ENCODE measurements at regions of chr9 and their contacts with region 1.

Region 1: DNA sequence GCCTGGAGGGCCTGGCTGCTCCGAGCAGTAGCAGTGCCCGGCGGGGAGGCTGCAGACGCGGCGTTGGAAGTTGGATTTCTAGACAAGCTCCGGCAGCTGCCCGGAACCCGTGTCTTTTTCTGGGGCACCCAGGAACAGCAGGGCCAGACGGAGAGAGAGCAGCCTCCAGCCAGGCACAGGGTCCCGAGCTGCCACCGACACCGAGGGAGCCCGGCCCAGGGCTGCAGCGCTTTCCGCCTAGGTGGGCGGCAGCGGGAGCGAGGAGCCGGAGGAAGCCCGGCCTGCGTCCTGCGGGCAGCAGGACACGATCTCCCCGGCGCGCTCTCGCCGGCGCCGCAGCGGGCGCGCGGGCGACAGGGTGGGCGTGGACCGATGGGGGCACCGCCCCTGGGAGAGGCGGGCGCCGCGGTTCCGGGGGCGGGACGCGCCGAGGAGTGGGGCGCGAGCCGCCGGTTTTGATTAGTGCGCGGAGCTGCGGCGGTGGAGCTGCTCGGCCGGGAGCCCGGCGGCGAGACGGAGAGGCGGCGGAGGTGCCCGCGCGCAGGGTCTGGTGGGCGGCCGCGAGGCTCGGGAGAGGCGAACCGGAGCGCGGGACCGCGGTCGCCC is at the start of gene UGCG:
- DNase-seq: peak; percentile 97
- H3K4me3 Mint-ChIP-seq: peak within 1 kb of the TSS; percentile 96
- H3K27ac Mint-ChIP-seq: peak within 1 kb of the TSS; percentile 88
- H3K4me1 Mint-ChIP-seq: peaks cover 22% of the 10 kb centered on the region
- H3K27me3 Mint-ChIP-seq: no peaks in the 10 kb centered on the region
- total RNA-seq, gene UGCG: 19.9 and 22.4 TPM in 2 replicates

Region 2: DNA sequence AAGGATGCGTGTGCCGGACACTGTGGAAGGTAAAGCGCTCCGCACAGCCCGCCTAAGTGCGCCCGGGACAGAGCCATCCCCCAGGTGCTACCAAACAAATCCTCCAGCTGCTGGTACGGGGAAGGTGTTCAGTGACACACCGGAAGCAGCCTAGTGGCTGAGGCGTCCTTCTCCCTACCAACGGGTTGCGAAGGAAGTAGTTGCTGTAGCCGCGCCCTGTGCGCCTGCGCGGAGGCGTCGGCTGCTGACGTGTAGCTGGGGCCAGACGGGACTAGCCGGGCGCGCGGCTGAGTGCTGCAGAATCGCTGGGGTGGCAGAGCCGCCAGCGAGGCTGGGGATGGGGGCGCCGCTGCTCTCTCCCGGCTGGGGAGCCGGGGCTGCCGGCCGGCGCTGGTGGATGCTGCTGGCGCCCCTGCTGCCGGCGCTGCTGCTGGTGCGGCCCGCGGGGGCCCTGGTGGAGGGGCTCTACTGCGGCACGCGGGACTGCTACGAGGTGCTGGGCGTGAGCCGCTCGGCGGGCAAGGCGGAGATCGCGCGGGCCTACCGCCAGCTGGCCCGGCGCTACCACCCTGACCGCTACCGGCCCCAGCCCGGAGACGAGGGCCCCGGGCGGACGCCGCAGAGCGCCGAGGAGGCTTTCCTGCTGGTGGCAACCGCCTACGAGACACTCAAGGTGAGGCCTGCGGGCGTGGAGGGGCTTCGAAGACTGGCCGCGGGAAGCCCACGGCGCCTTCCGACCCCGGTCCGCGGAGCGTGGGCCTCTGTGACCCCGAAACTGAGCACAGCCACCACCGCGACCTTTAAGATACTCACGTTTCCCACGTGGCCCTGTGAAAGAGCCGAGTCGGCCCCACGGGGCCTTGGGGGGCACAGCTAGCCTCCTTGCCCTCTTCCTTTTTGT is 265.1 kb before region 1 on chr9 and contains the start of gene DNAJC25:
- intact Hi-C with region 1: loop called (anchors 10 kb)
- DNase-seq: peak; percentile 99
- H3K4me3 Mint-ChIP-seq: peak within 1 kb of the TSS; percentile 98
- H3K27ac Mint-ChIP-seq: peak within 1 kb of the TSS; percentile 92
- H3K4me1 Mint-ChIP-seq: peaks cover 42% of the 10 kb centered on the region
- H3K27me3 Mint-ChIP-seq: no peaks in the 10 kb centered on the region
- total RNA-seq, gene DNAJC25: 7.1 and 7.5 TPM in 2 replicates

Region 3: DNA sequence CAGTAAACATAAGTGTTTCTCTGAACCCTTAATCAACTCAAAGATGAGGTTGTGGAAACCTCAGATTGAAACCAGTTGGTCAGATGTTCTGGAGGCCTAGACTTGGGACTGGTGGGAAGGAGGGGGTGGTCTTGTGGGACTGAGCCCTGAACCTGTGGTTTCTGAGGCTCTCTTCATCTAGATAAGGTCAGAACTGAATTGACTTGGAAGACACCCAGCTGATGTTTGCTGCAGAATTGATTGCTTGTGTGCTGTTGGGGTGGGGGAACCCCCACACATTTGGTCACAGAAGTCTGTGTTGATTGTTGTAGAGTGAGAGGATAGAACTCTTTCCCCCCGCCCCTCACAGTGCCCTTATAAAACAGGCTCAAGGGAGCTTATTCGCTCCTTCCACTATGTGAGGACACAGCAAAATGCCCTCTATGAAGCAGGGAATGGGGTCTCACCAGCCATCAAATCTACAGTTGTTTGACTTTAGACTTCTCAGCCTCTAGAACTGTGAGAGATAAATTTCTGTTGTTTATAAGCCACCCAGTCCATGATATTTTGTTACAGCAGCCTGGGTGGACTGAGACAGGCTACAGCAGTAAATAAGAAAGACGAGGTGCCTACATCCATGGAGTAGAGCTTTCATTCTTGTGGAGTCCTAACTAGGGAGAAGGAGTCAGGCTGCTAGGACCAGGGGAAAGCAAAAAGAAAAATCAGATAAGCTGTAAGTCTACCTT is 25.5 kb before region 1 on chr9:
- intact Hi-C with region 1: loop called (anchors 2 kb)
- DNase-seq: peak; percentile 57
- H3K4me3 Mint-ChIP-seq: no peak overlapping the region
- H3K27ac Mint-ChIP-seq: peak overlapping the region; percentile 66
- H3K4me1 Mint-ChIP-seq: peaks cover 12% of the 10 kb centered on the region
- H3K27me3 Mint-ChIP-seq: peaks cover 19% of the 10 kb centered on the region

Region 4: GRCh38 chr9:111916234-111916645 is 19.8 kb after region 1 on chr9:
- intact Hi-C with region 1: loop called (anchors 1 kb)
- DNase-seq: peak; percentile 74
- H3K4me3 Mint-ChIP-seq: peak overlapping the region; percentile 3
- H3K27ac Mint-ChIP-seq: peak overlapping the region; percentile 89
- H3K4me1 Mint-ChIP-seq: peaks cover 38% of the 10 kb centered on the region
- H3K27me3 Mint-ChIP-seq: no peaks in the 10 kb centered on the region

Region 5: GRCh38 chr9:111994831-111995458 is 98.5 kb after region 1 on chr9:
- intact Hi-C with region 1: loop called (anchors 2 kb)
- DNase-seq: no peak
- H3K4me3 Mint-ChIP-seq: peak overlapping the region; percentile 34
- H3K27ac Mint-ChIP-seq: peak overlapping the region; percentile 76
- H3K4me1 Mint-ChIP-seq: peaks cover 23% of the 10 kb centered on the region
- H3K27me3 Mint-ChIP-seq: peaks cover 17% of the 10 kb centered on the region

Region 6: GRCh38 chr9:112074250-112075008 is 178.0 kb after region 1 on chr9:
- intact Hi-C with region 1: loop called (anchors 2 kb)
- DNase-seq: peak; percentile 89
- H3K4me3 Mint-ChIP-seq: peak overlapping the region; percentile 7
- H3K27ac Mint-ChIP-seq: peak overlapping the region; percentile 5
- H3K4me1 Mint-ChIP-seq: peaks cover 24% of the 10 kb centered on the region
- H3K27me3 Mint-ChIP-seq: peaks cover 3% of the 10 kb centered on the region